PC-9 (cell line): ENCODE measurements at regions of chr4 and their contacts with region 1.

Region 1: DNA sequence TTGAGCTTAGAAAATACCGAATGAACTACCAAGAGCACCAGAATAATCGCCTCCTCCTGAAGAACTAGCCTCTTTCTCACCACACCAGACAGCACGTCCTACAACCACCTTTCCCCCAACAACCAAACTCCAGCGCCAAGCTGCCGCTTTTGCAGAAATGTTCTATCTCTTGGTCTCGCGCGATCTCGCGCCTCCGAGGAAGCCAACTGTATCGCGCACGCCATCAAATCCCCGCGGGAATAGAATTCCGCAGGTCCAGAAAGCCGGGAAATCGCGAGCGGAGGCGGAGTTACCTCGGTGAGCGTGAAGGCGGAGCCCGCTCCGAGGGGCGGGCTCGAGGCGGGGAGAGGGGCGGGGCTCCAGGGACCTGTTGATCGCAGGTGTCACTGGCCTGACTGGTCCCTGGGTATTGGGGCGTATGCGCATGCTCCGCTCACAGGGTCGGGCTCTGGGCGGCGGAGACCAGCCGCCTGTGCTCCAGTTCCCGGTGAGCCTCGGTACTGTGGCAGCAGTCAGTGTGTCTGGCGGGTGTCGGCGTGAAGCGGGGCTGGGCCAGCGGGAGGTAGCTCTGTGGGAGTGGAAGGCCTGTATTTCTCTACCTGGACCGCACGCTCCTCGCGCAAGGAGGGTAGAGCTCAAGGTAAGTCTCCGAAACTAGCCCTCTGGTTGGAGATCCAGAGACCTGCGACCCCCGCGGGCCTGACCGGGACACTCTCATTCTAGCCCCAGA is at the start of gene USP53:
- DNase-seq: peak; percentile 90 to 96
- H3K4me3 ChIP-seq: peak within 1 kb of the TSS; percentile 92
- H3K27ac ChIP-seq: peak within 1 kb of the TSS; percentile 94
- H3K4me1 ChIP-seq: peaks cover 40% of the 10 kb centered on the region
- H3K27me3 ChIP-seq: no peaks in the 10 kb centered on the region
- CTCF ChIP-seq: no peak
- total RNA-seq, gene USP53: 14.6 and 19.3 TPM in 2 replicates

Region 2: DNA sequence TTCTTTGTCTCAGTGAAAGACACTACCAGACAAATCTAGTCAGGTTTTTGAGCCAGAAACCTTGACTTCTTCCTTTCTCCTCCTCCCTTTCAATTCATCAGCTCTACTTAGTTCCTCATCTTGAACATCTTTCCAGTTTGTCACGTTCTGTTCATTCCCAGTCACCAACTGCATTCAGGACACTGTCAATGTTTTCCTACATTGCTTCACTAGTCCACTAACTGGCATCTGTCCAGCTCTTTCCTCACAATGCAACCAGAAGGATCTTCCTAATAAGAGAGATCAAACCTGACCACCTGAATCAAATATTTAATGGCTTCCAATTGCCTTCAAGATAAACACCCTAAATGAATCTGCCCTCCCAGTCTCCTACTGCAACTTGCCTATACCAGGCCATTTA is 271.2 kb before region 1 on chr4:
- CTCF ChIA-PET with region 1: no interaction called
- POLR2A ChIA-PET with region 1: no interaction called
- intact Hi-C with region 1: no loop called
- DNase-seq: no peak
- H3K4me3 ChIP-seq: no peak overlapping the region
- H3K27ac ChIP-seq: no peak overlapping the region
- H3K4me1 ChIP-seq: 0 out of 2 replicates have a peak, but pooled peaks cover 7% of the 10 kb centered on the region
- H3K27me3 ChIP-seq: no peaks in the 10 kb centered on the region
- CTCF ChIP-seq: no peak

Region 3: DNA sequence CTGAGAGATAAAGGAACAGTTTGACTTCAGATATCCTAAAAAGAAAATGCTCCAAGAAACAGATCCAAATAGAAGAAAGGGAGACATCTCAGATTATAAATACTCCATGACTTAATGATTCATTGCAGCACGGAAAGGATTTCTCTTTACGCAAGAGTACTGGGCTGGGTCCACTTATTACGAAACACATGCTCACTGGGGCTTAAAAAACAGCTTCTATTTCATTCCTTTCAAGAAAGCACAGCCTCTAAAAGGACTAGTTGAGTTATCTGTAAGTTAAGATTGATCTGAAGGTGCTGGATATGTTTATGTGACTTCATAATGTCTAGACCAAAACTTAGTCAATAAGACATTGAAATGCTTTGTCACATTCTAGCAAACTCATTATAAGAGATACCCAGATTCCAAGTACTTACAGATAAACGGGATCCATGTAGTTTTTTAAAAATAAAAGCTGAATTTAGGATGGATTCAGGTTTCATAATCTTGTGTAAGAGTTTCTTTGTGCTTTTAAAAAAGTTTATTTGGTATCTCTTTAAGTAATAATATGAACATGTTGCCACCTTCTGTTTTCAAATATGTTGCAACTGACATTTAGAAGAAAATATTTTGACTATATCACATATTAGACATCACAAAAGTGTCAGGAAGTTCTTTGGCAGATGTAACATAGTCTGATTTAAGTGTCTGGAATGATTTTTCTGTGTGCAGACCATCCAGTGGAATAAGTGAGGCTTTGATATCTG is 186.3 kb before region 1 on chr4:
- CTCF ChIA-PET with region 1: no interaction called
- POLR2A ChIA-PET with region 1: interaction called, 17 read pairs
- intact Hi-C with region 1: no loop called
- DNase-seq: peak; percentile 12 to 81
- H3K4me3 ChIP-seq: peak overlapping the region; percentile 53; the same call in 1 of the 2 replicates
- H3K27ac ChIP-seq: peak overlapping the region; percentile 97
- H3K4me1 ChIP-seq: peaks cover 20% of the 10 kb centered on the region
- H3K27me3 ChIP-seq: no peaks in the 10 kb centered on the region
- CTCF ChIP-seq: no peak

Region 4: DNA sequence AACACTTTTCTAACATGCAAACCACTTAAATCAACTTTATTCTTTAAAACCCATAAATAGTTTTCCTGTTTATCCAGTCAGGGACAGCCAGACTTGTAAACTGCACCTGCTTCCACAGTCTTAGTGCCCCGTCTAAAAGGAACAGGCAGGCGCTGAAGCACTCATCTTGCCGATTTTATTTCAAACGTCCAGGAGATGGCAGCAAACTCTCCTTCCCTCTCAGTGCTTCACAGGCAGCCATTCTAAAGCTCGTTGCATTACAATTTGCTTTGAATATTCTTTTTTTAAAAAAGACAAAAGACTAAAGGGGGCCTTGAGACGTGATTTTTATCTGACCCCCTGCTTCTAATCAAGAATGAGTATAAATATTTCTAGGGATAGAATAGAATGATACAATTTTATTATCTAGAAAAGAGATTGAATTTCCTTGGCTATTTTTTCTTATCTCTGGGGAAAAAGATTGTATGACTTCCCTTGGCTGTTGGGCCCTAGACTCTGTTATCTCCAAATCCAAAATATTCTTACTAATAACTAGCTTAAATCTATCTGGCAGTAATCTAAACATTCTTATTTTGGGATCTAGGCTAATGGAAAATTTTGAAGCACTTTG is 170.3 kb before region 1 on chr4:
- CTCF ChIA-PET with region 1: no interaction called
- POLR2A ChIA-PET with region 1: no interaction called
- intact Hi-C with region 1: loop called (anchors 1 kb)
- DNase-seq: peak; percentile 14 to 40
- H3K4me3 ChIP-seq: no peak overlapping the region
- H3K27ac ChIP-seq: no peak overlapping the region
- H3K4me1 ChIP-seq: no peaks in the 10 kb centered on the region
- H3K27me3 ChIP-seq: no peaks in the 10 kb centered on the region
- CTCF ChIP-seq: peak; percentile 69

Region 5: GRCh38 chr4:119103263-119103662 is 109.1 kb before region 1 on chr4:
- CTCF ChIA-PET with region 1: no interaction called
- POLR2A ChIA-PET with region 1: interaction called, 12 read pairs
- intact Hi-C with region 1: loop called (anchors 1 kb)
- DNase-seq: peak in 1 of 2 experiments; percentile 97
- H3K4me3 ChIP-seq: peak overlapping the region; percentile 19; the same call in 1 of the 2 replicates
- H3K27ac ChIP-seq: peak overlapping the region; percentile 91
- H3K4me1 ChIP-seq: peaks cover 31% of the 10 kb centered on the region
- H3K27me3 ChIP-seq: no peaks in the 10 kb centered on the region
- CTCF ChIP-seq: no peak

Region 6: DNA sequence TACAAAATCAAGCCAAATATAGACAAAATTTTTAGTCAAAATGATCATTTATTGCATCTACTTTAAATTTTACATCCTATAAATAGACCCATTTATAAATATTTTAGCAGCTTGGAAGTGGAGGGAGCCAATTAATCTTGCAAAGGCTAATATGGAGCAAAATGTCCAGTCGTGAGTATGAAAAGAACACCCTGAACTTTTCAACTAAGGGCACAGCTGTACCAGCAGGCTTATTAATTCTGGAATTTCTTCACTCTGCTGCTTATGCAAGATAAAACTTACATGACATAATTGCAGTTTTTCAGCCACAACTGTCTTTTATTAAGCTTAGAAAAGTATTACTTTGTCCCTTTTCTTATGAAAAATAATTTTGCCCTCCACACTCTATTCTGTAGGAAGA is 22.8 kb before region 1 on chr4:
- CTCF ChIA-PET with region 1: no interaction called
- POLR2A ChIA-PET with region 1: interaction called, 13 read pairs
- intact Hi-C with region 1: no loop called
- DNase-seq: no peak
- H3K4me3 ChIP-seq: no peak overlapping the region
- H3K27ac ChIP-seq: no peak overlapping the region
- H3K4me1 ChIP-seq: no peaks in the 10 kb centered on the region
- H3K27me3 ChIP-seq: no peaks in the 10 kb centered on the region
- CTCF ChIP-seq: no peak

Region 7: DNA sequence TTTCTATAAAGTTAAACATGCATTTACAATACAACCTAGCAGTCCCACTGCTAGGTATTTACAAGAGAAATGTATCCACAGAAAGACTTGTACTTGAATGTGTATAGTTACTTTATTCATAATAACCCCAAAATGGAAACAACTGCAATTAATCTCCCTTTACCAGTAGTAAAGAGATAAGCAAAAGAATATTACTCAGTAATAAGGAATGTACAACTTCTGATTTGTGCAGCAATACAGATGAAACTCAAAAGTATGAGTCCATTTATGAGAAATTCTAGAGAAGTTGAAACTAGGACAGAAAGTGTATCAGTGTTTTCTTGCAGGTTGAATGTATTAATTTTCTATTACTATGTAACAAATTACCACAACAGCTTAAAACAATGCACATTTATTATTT is 15.3 kb after region 1 on chr4:
- CTCF ChIA-PET with region 1: no interaction called
- POLR2A ChIA-PET with region 1: no interaction called
- intact Hi-C with region 1: no loop called
- DNase-seq: no peak
- H3K4me3 ChIP-seq: no peak overlapping the region
- H3K27ac ChIP-seq: no peak overlapping the region
- H3K4me1 ChIP-seq: no peaks in the 10 kb centered on the region
- H3K27me3 ChIP-seq: no peaks in the 10 kb centered on the region
- CTCF ChIP-seq: no peak